Dendritic cell treated with granulocyte-macrophage colony-stimulating factor and Interleukin-4, amounts not matched to agents 40 ng/mL and 50 ng/mL, for 4 days (primary cell): ENCODE measurements at regions of chr3 and their contacts with region 1.

Region 1: GRCh38 chr3:107235928-107236315 is 141.3 kb upstream of the CCDC54 start:
- H3K4me3 Mint-ChIP-seq: peak overlapping the region; percentile 35
- H3K27ac Mint-ChIP-seq: no peak overlapping the region
- H3K4me1 Mint-ChIP-seq: peaks cover 13% of the 10 kb centered on the region
- H3K27me3 Mint-ChIP-seq: peaks cover 5% of the 10 kb centered on the region

Region 2: GRCh38 chr3:107068980-107069379 is 166.9 kb before region 1 on chr3:
- intact Hi-C with region 1: no loop called
- H3K4me3 Mint-ChIP-seq: no peak overlapping the region
- H3K27ac Mint-ChIP-seq: no peak overlapping the region
- H3K4me1 Mint-ChIP-seq: peaks cover 6% of the 10 kb centered on the region
- H3K27me3 Mint-ChIP-seq: peaks cover 7% of the 10 kb centered on the region

Region 3: DNA sequence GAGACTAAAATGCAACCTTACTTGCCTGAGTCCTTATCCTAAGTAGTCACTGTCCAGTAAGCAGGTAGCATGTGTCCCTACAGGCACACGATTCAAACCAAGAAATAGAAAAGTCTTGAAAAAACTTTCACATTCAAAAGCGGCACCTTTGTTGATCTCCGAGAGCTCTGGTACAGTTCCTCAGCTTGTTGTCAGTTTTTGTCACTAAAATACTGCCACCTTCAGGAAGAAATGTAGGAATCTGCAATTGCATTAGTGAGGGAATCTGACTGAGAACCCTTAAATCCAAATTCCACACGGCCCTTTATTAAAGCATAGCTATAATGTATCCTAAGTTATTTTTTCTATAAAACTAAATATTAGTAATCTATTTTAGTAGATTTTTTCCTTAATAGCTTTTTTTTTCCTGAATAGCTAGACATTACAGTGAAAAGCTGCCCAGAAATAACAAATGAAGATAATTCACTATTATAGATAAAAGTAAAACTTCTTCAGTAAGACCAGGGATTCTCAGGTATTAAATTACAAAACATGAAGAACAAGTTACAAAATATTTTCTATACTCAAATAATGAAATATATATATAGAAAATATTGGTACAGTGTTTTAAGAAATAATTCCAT is 185.4 kb after region 1 on chr3:
- intact Hi-C with region 1: loop called (anchors 2 kb)
- H3K4me3 Mint-ChIP-seq: no peak overlapping the region
- H3K27ac Mint-ChIP-seq: no peak overlapping the region
- H3K4me1 Mint-ChIP-seq: peaks cover 5% of the 10 kb centered on the region
- H3K27me3 Mint-ChIP-seq: peaks cover 5% of the 10 kb centered on the region

Region 4: DNA sequence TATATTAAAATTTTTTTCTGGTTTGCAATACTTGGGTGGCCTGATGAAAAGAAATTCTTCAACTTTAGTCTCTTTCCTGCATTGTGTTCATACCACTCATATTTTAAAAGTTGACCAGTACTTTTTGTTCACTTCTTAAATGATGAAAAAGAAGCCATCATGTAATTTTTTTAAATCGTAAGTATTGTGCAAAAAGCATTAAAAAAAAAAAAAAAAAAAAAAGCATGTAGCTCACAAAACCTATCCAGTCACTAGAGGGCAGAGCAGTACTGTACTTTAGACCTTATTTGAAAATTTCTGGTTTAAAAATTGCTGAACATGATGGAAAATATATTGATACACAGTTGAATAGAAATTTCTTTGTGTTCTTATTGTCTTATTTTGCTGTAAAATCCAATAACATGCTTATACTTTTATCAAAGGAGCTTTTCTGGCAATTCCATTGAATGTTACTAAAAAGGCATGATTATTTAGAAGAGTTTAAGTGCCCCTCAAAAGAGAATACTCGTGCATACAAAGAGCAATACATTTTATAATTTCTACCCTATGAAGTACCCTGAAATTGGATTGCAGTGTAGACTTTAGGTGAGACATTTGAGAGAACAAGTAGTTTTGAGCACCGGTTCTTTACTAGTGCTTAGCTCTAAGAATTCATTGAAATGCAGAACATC is 424.5 kb after region 1 on chr3:
- intact Hi-C with region 1: loop called (anchors 10 kb)
- H3K4me3 Mint-ChIP-seq: no peak overlapping the region
- H3K27ac Mint-ChIP-seq: no peak overlapping the region
- H3K4me1 Mint-ChIP-seq: peaks cover 22% of the 10 kb centered on the region
- H3K27me3 Mint-ChIP-seq: no peaks in the 10 kb centered on the region

Region 5: GRCh38 chr3:107846279-107846852 is 610.4 kb after region 1 on chr3:
- intact Hi-C with region 1: loop called (anchors 5 kb)
- H3K4me3 Mint-ChIP-seq: no peak overlapping the region
- H3K27ac Mint-ChIP-seq: no peak overlapping the region
- H3K4me1 Mint-ChIP-seq: no peaks in the 10 kb centered on the region
- H3K27me3 Mint-ChIP-seq: no peaks in the 10 kb centered on the region

Region 6: GRCh38 chr3:108477511-108478147 is 1241.7 kb after region 1 on chr3:
- intact Hi-C with region 1: loop called (anchors 10 kb)
- H3K4me3 Mint-ChIP-seq: no peak overlapping the region
- H3K27ac Mint-ChIP-seq: no peak overlapping the region
- H3K4me1 Mint-ChIP-seq: no peaks in the 10 kb centered on the region
- H3K27me3 Mint-ChIP-seq: no peaks in the 10 kb centered on the region